ENCODE measurements at regions of chr9 and their contacts with region 1.

Region 1: GRCh38 chr9:71819115-71819739 is 50.9 kb upstream of the CEMIP2 start:
- DNase-seq: no peak
- H3K4me3 ChIP-seq: no peak overlapping the region
- H3K27ac ChIP-seq: no peak overlapping the region
- H3K27me3 ChIP-seq: peaks cover 3% of the 10 kb centered on the region
- CTCF ChIP-seq: peak; percentile 78

Region 2: DNA sequence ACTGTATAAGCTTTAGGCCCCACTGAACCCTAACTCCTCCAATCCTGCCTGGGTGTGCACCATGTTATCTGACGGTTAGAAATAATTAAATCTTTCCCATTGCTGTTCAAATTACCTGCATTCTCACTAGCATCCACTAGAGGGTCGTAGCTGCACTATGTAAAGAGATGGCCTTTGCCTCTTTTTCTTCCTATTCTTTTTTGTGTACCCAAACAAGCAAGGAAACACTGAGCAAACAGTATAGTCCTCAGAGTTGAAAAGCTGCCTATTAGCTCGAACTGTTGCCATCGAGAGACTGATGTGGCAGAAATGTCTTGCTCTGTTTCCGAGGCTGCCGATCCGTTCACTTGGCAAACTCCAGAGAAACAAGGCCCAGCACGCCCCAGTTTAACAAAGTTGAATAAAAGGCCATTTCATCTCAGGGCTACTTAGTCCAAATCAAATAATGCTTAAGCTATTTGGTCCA is 534.0 kb before region 1 on chr9:
- CTCF ChIA-PET with region 1: interaction called, 60 read pairs
- POLR2A ChIA-PET with region 1: no interaction called
- DNase-seq: peak; percentile 33
- H3K4me3 ChIP-seq: no peak overlapping the region
- H3K27ac ChIP-seq: no peak overlapping the region
- H3K27me3 ChIP-seq: no peaks in the 10 kb centered on the region
- CTCF ChIP-seq: peak; percentile 92

Region 3: GRCh38 chr9:71716138-71716909 is 102.9 kb before region 1 on chr9:
- CTCF ChIA-PET with region 1: interaction called, 10 read pairs
- POLR2A ChIA-PET with region 1: no interaction called
- DNase-seq: no peak
- H3K4me3 ChIP-seq: no peak overlapping the region
- H3K27ac ChIP-seq: no peak overlapping the region
- H3K27me3 ChIP-seq: no peaks in the 10 kb centered on the region
- CTCF ChIP-seq: peak; percentile 60

Region 4: GRCh38 chr9:71806901-71807307 is 12.3 kb before region 1 on chr9:
- CTCF ChIA-PET with region 1: interaction called, 98 read pairs
- POLR2A ChIA-PET with region 1: no interaction called
- DNase-seq: peak; percentile 23
- H3K4me3 ChIP-seq: no peak overlapping the region
- H3K27ac ChIP-seq: no peak overlapping the region
- H3K27me3 ChIP-seq: peaks cover 2% of the 10 kb centered on the region
- CTCF ChIP-seq: peak; percentile 98

Region 5: GRCh38 chr9:71858812-71859211 is 39.6 kb after region 1 on chr9:
- CTCF ChIA-PET with region 1: interaction called, 17 read pairs
- POLR2A ChIA-PET with region 1: no interaction called
- DNase-seq: no peak
- H3K4me3 ChIP-seq: no peak overlapping the region
- H3K27ac ChIP-seq: no peak overlapping the region
- H3K27me3 ChIP-seq: no peaks in the 10 kb centered on the region
- CTCF ChIP-seq: no peak

Region 6: GRCh38 chr9:72022841-72023240 is 203.6 kb after region 1 on chr9:
- CTCF ChIA-PET with region 1: interaction called, 85 read pairs
- POLR2A ChIA-PET with region 1: no interaction called
- DNase-seq: peak; percentile 47
- H3K4me3 ChIP-seq: no peak overlapping the region
- H3K27ac ChIP-seq: no peak overlapping the region
- H3K27me3 ChIP-seq: no peaks in the 10 kb centered on the region
- CTCF ChIP-seq: no peak

Measured in AG04450 (cell line).